ENCODE measurements at regions of chr6 and their contacts with region 1.

Region 1: GRCh38 chr6:89610149-89610642 is 28.4 kb downstream of the LYRM2 start:
- DNase-seq: peak; percentile 59
- ATAC-seq: peak; percentile 66
- H3K4me3 ChIP-seq: no peak overlapping the region
- H3K27ac ChIP-seq: no peak overlapping the region
- H3K4me1 ChIP-seq: no peaks in the 10 kb centered on the region
- H3K27me3 ChIP-seq: no peaks in the 10 kb centered on the region
- CTCF ChIP-seq: peak; percentile 86

Region 2: GRCh38 chr6:89432875-89433251 is 177.3 kb before region 1 on chr6 and contains the start of gene ANKRD6:
- CTCF ChIA-PET with region 1: no interaction called
- POLR2A ChIA-PET with region 1: no interaction called
- intact Hi-C with region 1: loop called (anchors 1 kb)
- DNase-seq: peak; percentile 77
- ATAC-seq: peak; percentile 92
- H3K4me3 ChIP-seq: peak within 1 kb of the TSS; percentile 71
- H3K27ac ChIP-seq: no peak within 1 kb of the TSS
- H3K4me1 ChIP-seq: no peaks in the 10 kb centered on the region
- H3K27me3 ChIP-seq: no peaks in the 10 kb centered on the region
- CTCF ChIP-seq: peak; percentile 59
- total RNA-seq, gene ANKRD6: 5.6 and 6.9 TPM in 2 replicates